ENCODE measurements at regions of chr10 and their contacts with region 1.

Region 1: DNA sequence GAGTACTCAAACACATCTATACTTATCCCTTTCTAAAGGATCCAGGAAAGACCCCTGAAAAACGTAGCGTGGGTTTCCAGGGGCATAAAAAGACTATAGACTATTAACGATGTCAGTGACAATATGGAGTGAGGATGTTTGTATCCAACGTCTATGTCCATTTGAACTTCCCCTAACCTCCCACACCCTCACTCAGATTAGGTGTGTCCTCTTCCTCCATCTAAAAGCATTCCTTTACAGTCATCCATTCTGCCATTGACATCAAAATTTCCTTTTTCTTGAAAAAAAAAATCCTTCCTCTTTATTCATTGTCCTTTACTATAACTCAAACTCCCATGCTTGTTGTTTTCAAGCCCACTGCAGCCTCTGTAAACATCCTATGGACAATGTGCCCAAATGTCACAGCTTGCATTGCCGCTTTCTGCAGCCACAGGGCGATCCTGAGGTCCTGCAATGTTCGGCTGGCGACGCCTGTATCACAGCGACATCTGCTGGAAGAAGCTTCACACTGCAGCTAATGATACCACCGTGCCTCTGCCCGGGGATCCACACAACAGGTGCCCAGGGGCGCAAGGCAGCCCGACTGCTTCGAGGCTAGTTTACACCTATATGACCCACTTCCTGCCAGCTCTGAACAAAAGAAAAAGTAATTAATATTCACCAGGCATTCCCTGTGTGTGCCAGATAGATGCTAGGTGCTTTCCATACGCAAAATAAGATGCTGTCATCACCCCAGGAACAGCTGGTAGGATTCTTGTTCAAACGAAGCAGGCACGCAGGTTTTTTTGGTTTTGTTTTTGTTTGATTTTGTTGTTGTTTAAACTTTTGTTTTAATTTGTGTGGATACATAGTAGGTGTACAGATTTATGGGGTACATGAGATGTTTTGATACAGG is 267.9 kb upstream of the GHITM start:
- DNase-seq: peak; percentile 55
- ATAC-seq: peak; percentile 58
- H3K4me3 ChIP-seq: no peak overlapping the region
- H3K4me3 Mint-ChIP-seq: no peak overlapping the region
- H3K27ac ChIP-seq: no peak overlapping the region
- H3K27ac Mint-ChIP-seq: no peak overlapping the region
- H3K4me1 ChIP-seq: no peaks in the 10 kb centered on the region
- H3K4me1 Mint-ChIP-seq: no peaks in the 10 kb centered on the region
- H3K27me3 ChIP-seq: no peaks in the 10 kb centered on the region
- H3K27me3 Mint-ChIP-seq: no peaks in the 10 kb centered on the region
- CTCF ChIP-seq: peak; percentile 97

Region 2: GRCh38 chr10:83849135-83849534 is 22.3 kb before region 1 on chr10:
- CTCF ChIA-PET with region 1: interaction called, 11 read pairs
- POLR2A ChIA-PET with region 1: no interaction called
- intact Hi-C with region 1: no loop called
- DNase-seq: no peak
- ATAC-seq: no peak
- H3K4me3 ChIP-seq: no peak overlapping the region
- H3K4me3 Mint-ChIP-seq: no peak overlapping the region
- H3K27ac ChIP-seq: no peak overlapping the region
- H3K27ac Mint-ChIP-seq: no peak overlapping the region
- H3K4me1 ChIP-seq: no peaks in the 10 kb centered on the region
- H3K4me1 Mint-ChIP-seq: no peaks in the 10 kb centered on the region
- H3K27me3 ChIP-seq: no peaks in the 10 kb centered on the region
- H3K27me3 Mint-ChIP-seq: no peaks in the 10 kb centered on the region
- CTCF ChIP-seq: no peak

Region 3: DNA sequence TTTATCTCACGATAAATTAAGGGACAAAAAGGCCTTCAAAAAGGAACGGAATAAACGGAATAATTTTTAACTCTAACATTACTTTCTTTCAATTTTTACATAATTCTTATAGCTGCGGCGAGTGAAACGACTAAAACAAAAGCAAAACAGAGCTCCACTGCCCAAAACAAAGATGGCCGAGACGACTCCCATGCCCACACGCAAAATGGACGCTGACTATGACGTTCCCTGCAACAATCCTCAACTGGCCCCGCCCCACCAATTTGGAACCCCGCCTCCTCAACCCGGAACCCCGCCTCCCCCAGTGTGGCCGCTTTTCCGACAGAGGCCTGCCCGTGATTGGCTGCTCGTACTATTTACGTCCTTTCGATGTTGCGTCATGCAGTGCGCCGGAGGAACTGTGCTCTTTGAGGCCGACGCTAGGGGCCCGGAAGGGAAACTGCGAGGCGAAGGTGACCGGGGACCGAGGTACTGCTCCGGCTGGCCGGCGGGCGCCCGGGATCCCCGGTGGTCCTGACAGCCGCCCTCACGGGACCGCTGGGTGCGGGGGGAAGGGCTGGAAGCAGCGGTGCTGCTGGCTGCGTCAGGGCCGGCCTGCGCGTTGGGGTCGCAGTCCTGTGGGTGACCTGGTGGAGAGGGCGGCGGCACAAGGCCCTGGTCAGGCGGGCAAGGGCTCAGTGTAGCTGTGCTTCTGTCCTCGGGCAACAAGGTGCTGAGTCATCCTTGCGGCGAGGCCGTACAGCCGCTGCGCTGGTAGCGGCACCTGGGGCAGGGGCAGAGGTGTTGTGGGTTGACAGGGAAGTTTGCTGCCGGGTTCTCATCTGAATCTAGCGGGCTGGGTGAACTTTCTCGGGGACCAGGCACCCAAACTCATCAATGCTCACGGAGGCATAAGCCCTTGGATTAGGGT is 267.9 kb after region 1 on chr10 and contains the start of gene GHITM:
- CTCF ChIA-PET with region 1: no interaction called
- POLR2A ChIA-PET with region 1: no interaction called
- intact Hi-C with region 1: no loop called
- DNase-seq: peak; percentile 99
- ATAC-seq: peak; percentile 96
- H3K4me3 ChIP-seq: peak within 1 kb of the TSS; percentile 80 to 98 (median 94)
- H3K4me3 Mint-ChIP-seq: peak within 1 kb of the TSS; percentile 96
- H3K27ac ChIP-seq: peak within 1 kb of the TSS; percentile 90 to 98
- H3K27ac Mint-ChIP-seq: peak within 1 kb of the TSS; percentile 90
- H3K4me1 ChIP-seq: peaks cover 16 to 21% of the 10 kb centered on the region in 2 donors
- H3K4me1 Mint-ChIP-seq: peaks cover 30% of the 10 kb centered on the region
- H3K27me3 ChIP-seq: no peaks in the 10 kb centered on the region
- H3K27me3 Mint-ChIP-seq: no peaks in the 10 kb centered on the region
- CTCF ChIP-seq: peak; percentile 44
- total RNA-seq, gene GHITM: 71.9 and 75.1 TPM in 2 replicates